ENCODE measurements at regions of chr1 and their contacts with region 1.

Region 1: DNA sequence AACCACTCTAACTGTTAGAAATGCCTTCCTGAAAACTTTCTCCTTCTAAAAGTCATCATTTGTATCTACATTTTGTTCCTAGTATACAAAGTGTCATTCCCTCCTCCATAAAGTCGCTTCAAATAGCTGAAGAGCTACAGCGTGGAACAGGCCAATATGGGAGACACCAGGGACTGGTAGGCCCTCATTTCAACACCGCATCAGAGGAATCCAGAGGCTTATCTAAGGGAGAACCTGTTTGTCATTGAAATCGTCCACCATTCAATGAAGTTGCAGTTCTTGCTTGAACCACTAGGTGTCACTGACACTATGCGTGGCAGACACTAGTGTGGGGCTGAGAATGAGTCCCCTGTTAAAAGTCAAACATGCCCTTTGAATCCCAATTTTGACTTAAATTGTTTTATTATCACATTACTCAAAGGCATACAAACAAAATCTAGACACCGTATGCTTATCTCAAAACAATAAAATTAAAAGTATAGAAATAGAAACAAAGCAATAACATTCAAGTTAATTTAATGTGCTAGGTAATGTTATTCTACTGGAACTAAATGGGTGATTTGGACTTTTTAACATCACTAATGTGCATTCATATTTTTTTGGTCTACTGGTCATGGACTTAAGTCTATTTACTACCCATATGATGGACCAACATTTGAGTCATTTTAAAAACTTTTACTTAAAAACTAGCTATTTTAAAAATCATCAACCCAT is 182.3 kb downstream of the FCRL5 start:
- DNase-seq: peak; percentile 86 to 88
- H3K4me3 ChIP-seq: no peak overlapping the region
- H3K4me3 Mint-ChIP-seq: peak overlapping the region; percentile 37
- H3K27ac Mint-ChIP-seq: peak overlapping the region; percentile 76
- H3K4me1 ChIP-seq: peaks cover 34% of the 10 kb centered on the region
- H3K4me1 Mint-ChIP-seq: peaks cover 53% of the 10 kb centered on the region
- H3K27me3 ChIP-seq: no peaks in the 10 kb centered on the region
- H3K27me3 Mint-ChIP-seq: no peaks in the 10 kb centered on the region
- CTCF ChIP-seq: peak; percentile 79 to 86

Region 2: GRCh38 chr1:156838981-156839410 is 531.0 kb before region 1 on chr1:
- CTCF ChIA-PET with region 1: no interaction called
- POLR2A ChIA-PET with region 1: no interaction called
- intact Hi-C with region 1: no loop called
- DNase-seq: peak in 1 of 2 experiments; percentile 49
- H3K4me3 ChIP-seq: no peak overlapping the region
- H3K4me3 Mint-ChIP-seq: no peak overlapping the region
- H3K27ac Mint-ChIP-seq: no peak overlapping the region
- H3K4me1 ChIP-seq: no peaks in the 10 kb centered on the region
- H3K4me1 Mint-ChIP-seq: no peaks in the 10 kb centered on the region
- H3K27me3 ChIP-seq: no peaks in the 10 kb centered on the region; the same call in 1 of the 2 replicates
- H3K27me3 Mint-ChIP-seq: peaks cover 30% of the 10 kb centered on the region
- CTCF ChIP-seq: peak; percentile 70 to 93

Region 3: DNA sequence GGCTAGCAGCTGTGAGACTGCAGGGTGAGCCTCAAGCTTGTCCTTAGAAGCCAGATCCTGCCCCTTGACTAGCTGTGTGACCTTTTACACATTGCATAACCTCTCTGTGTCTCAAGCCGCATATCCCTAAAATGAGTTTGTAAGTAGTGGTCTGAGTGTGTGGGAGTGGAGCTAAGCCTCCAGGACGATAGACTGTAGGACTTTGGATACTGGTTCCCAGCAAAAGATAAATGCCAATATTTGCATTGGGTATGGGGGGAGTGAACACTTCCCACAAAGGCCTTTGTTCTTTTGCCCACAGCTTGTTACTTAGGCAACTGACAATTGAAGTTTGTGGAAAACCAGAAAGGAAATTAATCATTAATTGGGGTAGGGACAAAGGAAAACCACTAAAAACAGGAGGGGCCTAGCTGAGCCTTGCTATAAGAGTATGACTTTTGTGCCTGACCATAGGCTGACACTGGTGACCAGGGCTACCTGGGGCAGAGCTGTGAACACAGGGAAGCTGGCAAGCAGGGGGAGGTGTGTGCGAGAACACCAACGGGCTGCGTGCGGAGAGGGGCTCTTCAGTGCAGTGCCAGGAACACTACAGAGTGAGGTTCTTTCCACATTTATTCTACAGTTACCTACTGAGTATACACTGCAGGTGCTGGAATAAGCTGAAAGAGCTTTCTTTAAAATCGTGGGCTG is 129.3 kb before region 1 on chr1:
- CTCF ChIA-PET with region 1: no interaction called
- POLR2A ChIA-PET with region 1: no interaction called
- intact Hi-C with region 1: loop called (anchors 2 kb)
- DNase-seq: peak; percentile 84 to 88
- H3K4me3 ChIP-seq: no peak overlapping the region
- H3K4me3 Mint-ChIP-seq: peak overlapping the region; percentile 36
- H3K27ac Mint-ChIP-seq: peak overlapping the region; percentile 91
- H3K4me1 ChIP-seq: peaks cover 50% of the 10 kb centered on the region
- H3K4me1 Mint-ChIP-seq: peaks cover 43% of the 10 kb centered on the region
- H3K27me3 ChIP-seq: no peaks in the 10 kb centered on the region
- H3K27me3 Mint-ChIP-seq: no peaks in the 10 kb centered on the region
- CTCF ChIP-seq: no peak

Region 4: DNA sequence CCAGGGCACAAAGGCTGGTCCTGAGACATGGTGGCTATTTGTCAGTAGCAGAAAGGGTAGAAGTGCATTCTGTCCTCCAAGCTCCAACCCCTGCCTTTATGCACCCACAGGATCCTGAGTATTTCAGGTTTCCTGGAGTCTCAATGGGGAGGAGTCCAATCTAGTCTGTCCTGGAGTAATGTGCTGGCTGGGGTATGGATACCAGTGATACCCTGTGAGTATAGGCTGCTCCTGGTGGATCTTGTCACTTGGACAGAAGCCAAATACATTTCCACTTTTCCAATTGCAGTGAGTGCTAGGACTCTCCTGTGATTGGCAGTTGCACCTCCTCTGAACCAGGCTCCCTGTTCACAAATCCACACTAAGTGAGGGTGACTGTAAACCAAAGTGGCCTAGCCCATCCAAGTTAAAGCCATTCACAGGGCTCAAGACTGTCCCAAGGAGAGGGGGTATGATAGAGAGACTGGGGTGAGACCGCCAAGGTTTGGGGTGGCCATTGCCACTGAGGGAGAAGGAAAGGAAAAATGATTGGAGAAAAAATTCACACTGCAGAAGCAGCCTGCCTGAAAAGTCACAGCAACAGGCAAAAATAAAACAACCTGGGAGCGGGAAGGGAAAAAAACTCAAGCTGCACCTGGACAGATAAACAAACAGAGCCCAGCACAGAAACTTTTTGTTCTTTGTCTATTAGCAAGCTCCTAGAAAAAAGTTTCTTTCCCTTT is 68.3 kb before region 1 on chr1:
- CTCF ChIA-PET with region 1: no interaction called
- POLR2A ChIA-PET with region 1: no interaction called
- intact Hi-C with region 1: no loop called
- DNase-seq: no peak
- H3K4me3 ChIP-seq: no peak overlapping the region
- H3K4me3 Mint-ChIP-seq: no peak overlapping the region
- H3K27ac Mint-ChIP-seq: no peak overlapping the region
- H3K4me1 ChIP-seq: no peaks in the 10 kb centered on the region
- H3K4me1 Mint-ChIP-seq: no peaks in the 10 kb centered on the region
- H3K27me3 ChIP-seq: no peaks in the 10 kb centered on the region
- H3K27me3 Mint-ChIP-seq: peaks cover 3% of the 10 kb centered on the region
- CTCF ChIP-seq: no peak

Region 5: DNA sequence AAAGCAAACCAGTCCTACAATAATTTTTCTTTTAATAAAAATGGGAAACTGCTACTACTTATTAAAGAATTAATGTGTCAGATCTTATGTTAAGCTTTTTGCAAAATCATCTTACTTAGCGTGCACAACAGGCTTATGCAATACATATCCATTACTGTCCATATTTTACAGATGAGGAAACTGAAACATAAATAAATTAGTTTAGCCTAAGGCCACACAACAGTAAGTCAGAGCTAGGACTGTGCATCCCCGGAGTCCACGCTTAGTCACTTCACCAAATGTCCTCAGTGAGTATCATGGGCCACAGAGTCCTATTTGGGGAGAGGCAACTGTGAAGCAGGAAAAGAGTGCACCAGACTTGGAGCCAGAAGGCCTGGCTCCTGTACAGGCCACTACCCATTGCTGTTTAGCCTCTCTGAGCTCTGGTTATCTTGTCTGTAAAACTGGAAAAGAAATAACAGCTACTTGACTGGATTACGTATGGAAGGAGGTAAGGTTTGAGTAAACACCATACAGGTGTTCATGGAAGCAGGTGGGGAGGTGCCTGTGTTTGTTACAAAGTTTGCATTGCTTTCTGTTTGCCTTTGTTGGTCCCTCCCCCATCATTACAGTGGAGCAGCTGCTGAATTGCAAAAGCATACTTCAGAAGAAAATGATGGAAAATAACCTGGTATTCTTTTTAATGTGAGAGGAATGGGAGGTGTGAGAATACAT is 10.5 kb before region 1 on chr1:
- CTCF ChIA-PET with region 1: no interaction called
- POLR2A ChIA-PET with region 1: no interaction called
- intact Hi-C with region 1: loop called (anchors 1 kb)
- DNase-seq: peak; percentile 65 to 66
- H3K4me3 ChIP-seq: no peak overlapping the region
- H3K4me3 Mint-ChIP-seq: no peak overlapping the region
- H3K27ac Mint-ChIP-seq: peak overlapping the region; percentile 10
- H3K4me1 ChIP-seq: peaks cover 10% of the 10 kb centered on the region; the same call in 1 of the 2 replicates
- H3K4me1 Mint-ChIP-seq: peaks cover 10% of the 10 kb centered on the region
- H3K27me3 ChIP-seq: no peaks in the 10 kb centered on the region
- H3K27me3 Mint-ChIP-seq: no peaks in the 10 kb centered on the region
- CTCF ChIP-seq: no peak

Region 6: GRCh38 chr1:157490467-157491165 is 120.7 kb after region 1 on chr1:
- CTCF ChIA-PET with region 1: no interaction called
- POLR2A ChIA-PET with region 1: no interaction called
- intact Hi-C with region 1: loop called (anchors 1 kb)
- DNase-seq: peak; percentile 71 to 79
- H3K4me3 ChIP-seq: no peak overlapping the region
- H3K4me3 Mint-ChIP-seq: no peak overlapping the region
- H3K27ac Mint-ChIP-seq: no peak overlapping the region
- H3K4me1 ChIP-seq: peaks cover under 1% of the 10 kb centered on the region; the same call in 1 of the 2 replicates
- H3K4me1 Mint-ChIP-seq: peaks cover 21% of the 10 kb centered on the region
- H3K27me3 ChIP-seq: no peaks in the 10 kb centered on the region
- H3K27me3 Mint-ChIP-seq: no peaks in the 10 kb centered on the region
- CTCF ChIP-seq: peak; percentile 65 to 75

Region 7: DNA sequence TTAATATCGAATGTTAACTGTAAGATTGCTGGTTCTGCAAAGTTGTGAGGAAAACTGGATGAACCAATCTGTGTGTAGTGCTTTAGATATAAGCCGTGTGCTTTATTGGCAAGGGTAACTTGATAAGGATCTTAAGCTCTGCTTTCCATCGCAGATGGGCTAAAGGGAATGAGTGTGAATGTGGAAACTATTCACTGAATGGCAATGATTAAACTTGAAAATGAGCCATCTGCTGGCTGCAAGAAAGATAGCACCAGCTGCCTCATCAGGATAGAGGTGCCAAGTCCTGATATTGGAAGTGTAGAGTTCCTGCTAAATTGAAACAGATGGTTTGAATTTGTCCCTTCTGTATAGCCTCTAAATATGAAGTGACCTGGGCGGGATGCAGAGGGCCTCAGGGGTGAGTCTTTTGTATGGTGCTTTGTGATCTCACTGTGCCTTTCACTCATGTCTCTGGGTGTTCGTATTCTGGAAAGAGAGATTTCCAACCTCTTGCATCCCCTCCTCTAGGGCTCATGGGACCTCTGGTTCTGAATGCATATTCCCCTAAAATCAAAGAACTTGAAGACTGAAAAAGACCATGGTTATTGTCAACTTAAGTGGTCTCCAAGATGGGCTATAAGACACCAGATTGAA is 321.4 kb after region 1 on chr1:
- CTCF ChIA-PET with region 1: no interaction called
- POLR2A ChIA-PET with region 1: no interaction called
- intact Hi-C with region 1: loop called (anchors 5 kb)
- DNase-seq: peak in 1 of 2 experiments; percentile 30
- H3K4me3 ChIP-seq: no peak overlapping the region
- H3K4me3 Mint-ChIP-seq: no peak overlapping the region
- H3K27ac Mint-ChIP-seq: no peak overlapping the region
- H3K4me1 ChIP-seq: no peaks in the 10 kb centered on the region
- H3K4me1 Mint-ChIP-seq: no peaks in the 10 kb centered on the region
- H3K27me3 ChIP-seq: no peaks in the 10 kb centered on the region
- H3K27me3 Mint-ChIP-seq: peaks cover 10% of the 10 kb centered on the region
- CTCF ChIP-seq: peak; percentile 56 to 64

Measured in Caco-2 (cell line).